Activated naive CD4-positive, alpha-beta T cell treated with anti-CD3 and anti-CD28 coated beads, Interleukin-2, amount 10 ng/mL, durations not matched to agents 7 days and 5 days (primary cell): ENCODE measurements at regions of chr11 and their contacts with region 1.

Region 1: GRCh38 chr11:82930229-82930628 is 28.7 kb downstream of the DDIAS start:
- DNase-seq: no peak
- H3K4me3 Mint-ChIP-seq: no peak overlapping the region
- H3K27ac Mint-ChIP-seq: no peak overlapping the region
- H3K4me1 Mint-ChIP-seq: peaks cover 25% of the 10 kb centered on the region
- H3K27me3 Mint-ChIP-seq: no peaks in the 10 kb centered on the region

Region 2: GRCh38 chr11:82898241-82898640 is 32.0 kb before region 1 on chr11:
- CTCF ChIA-PET with region 1: no interaction called
- DNase-seq: no peak
- H3K4me3 Mint-ChIP-seq: no peak overlapping the region
- H3K27ac Mint-ChIP-seq: no peak overlapping the region
- H3K4me1 Mint-ChIP-seq: peaks cover 44% of the 10 kb centered on the region
- H3K27me3 Mint-ChIP-seq: no peaks in the 10 kb centered on the region

Region 3: DNA sequence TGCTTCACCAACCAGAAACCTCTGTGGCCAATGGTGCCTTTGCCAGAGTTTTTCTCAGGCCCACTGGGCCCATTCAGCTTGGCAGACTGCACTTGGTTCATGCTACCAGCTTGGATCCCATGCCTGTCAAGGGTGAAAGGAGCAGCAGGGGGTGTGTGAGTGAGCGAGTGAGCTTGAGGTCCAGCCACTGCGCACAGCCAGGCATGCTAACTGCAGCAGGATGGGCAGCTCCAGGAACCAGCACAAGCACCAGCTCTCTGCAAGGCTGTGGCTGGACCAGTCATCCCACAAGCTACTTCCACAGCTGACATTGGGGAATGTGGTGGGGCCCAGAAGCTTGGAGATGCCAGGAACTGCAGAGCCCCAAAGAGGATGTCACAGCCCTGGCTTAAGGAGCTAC is 12.1 kb after region 1 on chr11:
- CTCF ChIA-PET with region 1: interaction called, 10 read pairs
- DNase-seq: no peak
- H3K4me3 Mint-ChIP-seq: no peak overlapping the region
- H3K27ac Mint-ChIP-seq: no peak overlapping the region
- H3K4me1 Mint-ChIP-seq: peaks cover 6% of the 10 kb centered on the region
- H3K27me3 Mint-ChIP-seq: peaks cover 3% of the 10 kb centered on the region